ENCODE measurements at regions of chr3 and their contacts with region 1.

Region 1: DNA sequence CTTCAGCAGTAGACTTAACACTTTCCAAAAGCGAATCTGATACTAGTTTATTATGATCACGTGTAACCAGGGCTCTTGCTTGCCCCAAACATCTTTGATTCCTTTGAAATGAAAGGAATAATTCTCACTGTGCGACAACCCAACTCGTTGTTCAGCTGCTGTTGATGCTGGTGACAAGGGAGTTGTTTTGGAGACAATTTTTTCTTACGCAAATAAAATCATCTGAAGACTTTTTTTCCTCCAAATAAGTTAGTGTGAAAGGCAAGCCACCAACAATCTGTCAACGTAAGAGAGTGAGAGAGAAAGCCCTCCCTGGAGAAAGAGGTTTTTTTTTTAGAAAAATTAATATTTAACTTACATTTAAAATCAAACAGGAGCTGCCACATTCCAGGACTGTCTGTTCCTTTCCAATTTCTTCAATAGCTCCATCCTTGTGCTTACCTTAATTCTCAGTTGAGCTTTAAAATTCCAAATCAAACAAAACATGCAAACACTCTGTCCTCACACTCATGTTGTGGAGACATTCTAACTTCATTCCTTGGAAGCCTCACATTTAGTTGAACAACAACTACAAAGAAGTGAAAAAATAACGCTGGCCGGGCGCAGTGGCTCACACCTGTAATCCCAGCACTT is 4.9 kb upstream of the P3H2 start:
- DNase-seq: no peak
- H3K4me3 ChIP-seq: no peak overlapping the region
- H3K27ac ChIP-seq: no peak overlapping the region
- H3K4me1 ChIP-seq: peaks cover 0 to 15% (median 9%) of the 10 kb centered on the region in 4 donors
- H3K27me3 ChIP-seq: no peaks in the 10 kb centered on the region
- CTCF ChIP-seq: no peak
- EP300 ChIP-seq: no peak
- POLR2A ChIP-seq: no peak

Region 2: GRCh38 chr3:189593581-189593980 is 532.0 kb before region 1 on chr3:
- intact Hi-C with region 1: no loop called
- DNase-seq: no peak
- H3K4me3 ChIP-seq: no peak overlapping the region
- H3K27ac ChIP-seq: no peak overlapping the region
- H3K4me1 ChIP-seq: no peaks in the 10 kb centered on the region
- H3K27me3 ChIP-seq: no peaks in the 10 kb centered on the region
- CTCF ChIP-seq: no peak
- EP300 ChIP-seq: no peak
- POLR2A ChIP-seq: no peak

Region 3: GRCh38 chr3:189727898-189728297 is 397.7 kb before region 1 on chr3:
- intact Hi-C with region 1: loop called (anchors 5 kb)
- DNase-seq: no peak
- H3K4me3 ChIP-seq: no peak overlapping the region
- H3K27ac ChIP-seq: no peak overlapping the region
- H3K4me1 ChIP-seq: no peaks in the 10 kb centered on the region
- H3K27me3 ChIP-seq: no peaks in the 10 kb centered on the region
- CTCF ChIP-seq: no peak
- EP300 ChIP-seq: no peak
- POLR2A ChIP-seq: no peak

Region 4: GRCh38 chr3:190655933-190656332 is 530.4 kb after region 1 on chr3:
- intact Hi-C with region 1: no loop called
- DNase-seq: no peak
- H3K4me3 ChIP-seq: no peak overlapping the region
- H3K27ac ChIP-seq: no peak overlapping the region
- H3K4me1 ChIP-seq: no peaks in the 10 kb centered on the region
- H3K27me3 ChIP-seq: no peaks in the 10 kb centered on the region
- CTCF ChIP-seq: no peak
- EP300 ChIP-seq: no peak
- POLR2A ChIP-seq: no peak

Region 5: DNA sequence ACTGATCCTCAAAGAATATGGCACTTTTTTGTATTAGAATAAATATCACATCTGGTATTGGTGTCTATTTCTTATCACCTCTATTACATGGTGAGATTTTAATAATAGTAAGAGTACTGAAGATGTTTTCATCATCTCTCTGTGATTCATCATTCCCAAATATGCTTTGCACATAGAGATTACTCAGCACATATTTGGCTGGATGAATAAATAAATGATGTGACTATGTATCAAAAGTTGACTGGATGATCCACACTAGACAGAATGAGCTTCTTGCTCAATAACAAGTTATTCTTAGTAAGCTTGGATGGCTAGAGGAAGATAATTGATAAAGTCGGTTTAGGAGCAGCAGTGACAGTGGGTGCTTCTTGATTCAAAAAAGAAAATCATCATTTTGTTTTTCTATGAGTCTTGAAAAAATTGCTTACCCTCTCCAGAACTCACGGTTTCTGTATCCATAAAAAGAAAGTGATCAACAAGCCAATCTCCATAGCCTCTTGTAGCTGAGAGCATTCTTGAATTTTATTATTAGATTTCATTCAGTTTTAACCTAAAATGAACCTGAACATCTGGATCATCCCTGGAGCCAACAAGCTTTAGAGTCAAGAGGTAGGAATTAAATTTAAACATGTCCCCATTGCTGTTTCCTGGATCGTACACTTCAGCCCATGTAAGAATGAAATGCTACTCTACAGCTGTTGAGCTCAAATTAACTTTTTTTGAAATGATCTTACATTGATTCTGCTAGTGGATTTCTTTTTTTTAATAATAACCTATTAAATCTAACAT is 968.7 kb after region 1 on chr3:
- intact Hi-C with region 1: no loop called
- DNase-seq: no peak
- H3K4me3 ChIP-seq: no peak overlapping the region
- H3K27ac ChIP-seq: no peak overlapping the region
- H3K4me1 ChIP-seq: no peaks in the 10 kb centered on the region
- H3K27me3 ChIP-seq: no peaks in the 10 kb centered on the region
- CTCF ChIP-seq: no peak
- EP300 ChIP-seq: no peak
- POLR2A ChIP-seq: no peak